PC-3 (cell line): ENCODE measurements at regions of chr7 and their contacts with region 1.

Region 1: GRCh38 chr7:31134246-31135188 is 82.4 kb downstream of the ADCYAP1R1 start:
- DNase-seq: peak; percentile 86
- ATAC-seq: peak; percentile 99
- H3K4me3 ChIP-seq: no peak overlapping the region
- H3K27ac ChIP-seq: no peak overlapping the region
- H3K4me1 ChIP-seq: no peaks in the 10 kb centered on the region
- H3K27me3 ChIP-seq: peaks cover 30% of the 10 kb centered on the region
- CTCF ChIP-seq: peak; percentile 76

Region 2: GRCh38 chr7:31122649-31123058 is 11.9 kb before region 1 on chr7:
- CTCF ChIA-PET with region 1: interaction called, 12 read pairs
- POLR2A ChIA-PET with region 1: no interaction called
- intact Hi-C with region 1: no loop called
- DNase-seq: peak; percentile 88
- ATAC-seq: peak; percentile 84
- H3K4me3 ChIP-seq: no peak overlapping the region
- H3K27ac ChIP-seq: no peak overlapping the region
- H3K4me1 ChIP-seq: no peaks in the 10 kb centered on the region
- H3K27me3 ChIP-seq: peaks cover 16% of the 10 kb centered on the region
- CTCF ChIP-seq: peak; percentile 86

Region 3: DNA sequence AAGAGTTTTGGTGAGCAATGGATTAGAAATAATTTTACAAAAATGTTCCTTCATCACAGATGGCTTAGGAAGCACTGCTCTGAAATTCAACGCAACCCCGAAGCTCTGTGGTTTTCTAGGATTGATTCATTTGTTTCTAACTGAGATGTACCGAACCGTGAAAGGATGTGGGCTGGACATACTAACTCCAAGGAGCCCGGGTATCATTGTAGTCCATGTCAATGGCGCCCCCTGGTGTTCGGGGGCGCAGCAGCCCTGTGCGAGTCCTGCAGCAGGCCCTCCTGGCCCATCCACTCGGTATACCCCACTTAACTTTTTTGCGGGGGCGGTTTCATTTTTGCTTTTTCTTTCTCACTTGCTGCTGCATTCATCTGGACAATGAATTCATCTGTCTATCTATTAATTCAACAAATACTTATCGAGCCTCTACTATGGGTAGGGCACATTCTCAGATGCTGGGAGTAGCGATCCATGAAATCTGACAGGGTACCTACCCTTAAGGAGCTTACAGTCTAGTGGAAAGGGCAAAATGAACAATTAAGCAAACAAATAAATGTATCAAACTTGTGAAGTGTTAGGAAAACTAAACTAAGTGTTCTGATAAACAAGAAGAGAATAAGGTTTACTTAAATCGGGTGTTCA is 354.2 kb after region 1 on chr7:
- CTCF ChIA-PET with region 1: no interaction called
- POLR2A ChIA-PET with region 1: no interaction called
- intact Hi-C with region 1: loop called (anchors 1 kb)
- DNase-seq: peak; percentile 87
- ATAC-seq: peak; percentile 100
- H3K4me3 ChIP-seq: no peak overlapping the region
- H3K27ac ChIP-seq: no peak overlapping the region
- H3K4me1 ChIP-seq: peaks cover 9% of the 10 kb centered on the region; the same call in 1 of the 2 replicates
- H3K27me3 ChIP-seq: no peaks in the 10 kb centered on the region
- CTCF ChIP-seq: peak; percentile 92

Region 4: GRCh38 chr7:31633894-31634494 is 499.5 kb after region 1 on chr7:
- CTCF ChIA-PET with region 1: interaction called, 5 read pairs
- POLR2A ChIA-PET with region 1: no interaction called
- intact Hi-C with region 1: loop called (anchors 1 kb)
- DNase-seq: peak; percentile 80
- ATAC-seq: peak; percentile 90
- H3K4me3 ChIP-seq: no peak overlapping the region
- H3K27ac ChIP-seq: no peak overlapping the region
- H3K4me1 ChIP-seq: no peaks in the 10 kb centered on the region
- H3K27me3 ChIP-seq: peaks cover 46% of the 10 kb centered on the region
- CTCF ChIP-seq: peak; percentile 76

Region 5: GRCh38 chr7:31735991-31736982 is 601.8 kb after region 1 on chr7:
- CTCF ChIA-PET with region 1: no interaction called
- POLR2A ChIA-PET with region 1: no interaction called
- intact Hi-C with region 1: loop called (anchors 1 kb)
- DNase-seq: peak; percentile 79
- ATAC-seq: peak; percentile 95
- H3K4me3 ChIP-seq: no peak overlapping the region
- H3K27ac ChIP-seq: no peak overlapping the region
- H3K4me1 ChIP-seq: no peaks in the 10 kb centered on the region
- H3K27me3 ChIP-seq: no peaks in the 10 kb centered on the region
- CTCF ChIP-seq: peak; percentile 84